ENCODE measurements at regions of chr3 and their contacts with region 1.

Region 1: GRCh38 chr3:38960953-38961622 is 90.7 kb downstream of the SCN11A start:
- DNase-seq: peak; percentile 54
- ATAC-seq: peak; percentile 42
- H3K4me3 Mint-ChIP-seq: no peak overlapping the region
- H3K27ac Mint-ChIP-seq: no peak overlapping the region
- H3K4me1 Mint-ChIP-seq: peaks cover 4% of the 10 kb centered on the region
- H3K27me3 Mint-ChIP-seq: no peaks in the 10 kb centered on the region

Region 2: GRCh38 chr3:38689774-38690173 is 271.3 kb before region 1 on chr3:
- CTCF ChIA-PET with region 1: no interaction called
- POLR2A ChIA-PET with region 1: no interaction called
- intact Hi-C with region 1: no loop called
- DNase-seq: no peak
- ATAC-seq: no peak
- H3K4me3 Mint-ChIP-seq: no peak overlapping the region
- H3K27ac Mint-ChIP-seq: no peak overlapping the region
- H3K4me1 Mint-ChIP-seq: no peaks in the 10 kb centered on the region
- H3K27me3 Mint-ChIP-seq: peaks cover 4% of the 10 kb centered on the region

Region 3: DNA sequence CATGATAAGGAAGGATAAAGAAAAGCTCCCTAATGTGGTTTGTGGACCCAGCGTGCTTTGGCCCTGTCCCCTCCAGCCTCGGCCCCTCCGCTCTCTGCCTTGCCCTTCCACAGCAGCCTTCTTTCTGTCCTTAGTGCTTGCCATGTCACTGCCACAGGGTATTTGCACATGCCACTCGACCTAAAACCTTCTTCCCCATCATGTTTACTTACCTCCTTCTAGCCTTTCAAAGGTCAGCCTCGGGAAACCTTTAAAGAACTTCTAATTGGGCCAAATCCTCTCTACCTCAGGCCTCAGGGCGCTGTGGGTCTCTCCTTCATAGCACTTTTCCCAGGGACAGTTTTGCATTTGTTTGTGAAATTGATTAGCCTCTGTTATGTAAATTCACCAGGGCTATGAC is 17.6 kb after region 1 on chr3:
- CTCF ChIA-PET with region 1: interaction called, 11 read pairs
- POLR2A ChIA-PET with region 1: no interaction called
- intact Hi-C with region 1: no loop called
- DNase-seq: no peak
- ATAC-seq: no peak
- H3K4me3 Mint-ChIP-seq: no peak overlapping the region
- H3K27ac Mint-ChIP-seq: no peak overlapping the region
- H3K4me1 Mint-ChIP-seq: no peaks in the 10 kb centered on the region
- H3K27me3 Mint-ChIP-seq: peaks cover 8% of the 10 kb centered on the region

Measured in activated CD4-positive, alpha-beta T cell treated with anti-CD3 and anti-CD28 coated beads for 36 hours (primary cell).